ENCODE measurements at regions of chr10 and their contacts with region 1.

Region 1: GRCh38 chr10:71748671-71749191 is 24.6 kb downstream of the VSIR start:
- DNase-seq: peak; percentile 85
- ATAC-seq: peak; percentile 83
- H3K4me3 Mint-ChIP-seq: peak overlapping the region; percentile 79
- H3K27ac Mint-ChIP-seq: peak overlapping the region; percentile 97
- H3K4me1 Mint-ChIP-seq: peaks cover 90% of the 10 kb centered on the region
- H3K27me3 Mint-ChIP-seq: no peaks in the 10 kb centered on the region

Region 2: DNA sequence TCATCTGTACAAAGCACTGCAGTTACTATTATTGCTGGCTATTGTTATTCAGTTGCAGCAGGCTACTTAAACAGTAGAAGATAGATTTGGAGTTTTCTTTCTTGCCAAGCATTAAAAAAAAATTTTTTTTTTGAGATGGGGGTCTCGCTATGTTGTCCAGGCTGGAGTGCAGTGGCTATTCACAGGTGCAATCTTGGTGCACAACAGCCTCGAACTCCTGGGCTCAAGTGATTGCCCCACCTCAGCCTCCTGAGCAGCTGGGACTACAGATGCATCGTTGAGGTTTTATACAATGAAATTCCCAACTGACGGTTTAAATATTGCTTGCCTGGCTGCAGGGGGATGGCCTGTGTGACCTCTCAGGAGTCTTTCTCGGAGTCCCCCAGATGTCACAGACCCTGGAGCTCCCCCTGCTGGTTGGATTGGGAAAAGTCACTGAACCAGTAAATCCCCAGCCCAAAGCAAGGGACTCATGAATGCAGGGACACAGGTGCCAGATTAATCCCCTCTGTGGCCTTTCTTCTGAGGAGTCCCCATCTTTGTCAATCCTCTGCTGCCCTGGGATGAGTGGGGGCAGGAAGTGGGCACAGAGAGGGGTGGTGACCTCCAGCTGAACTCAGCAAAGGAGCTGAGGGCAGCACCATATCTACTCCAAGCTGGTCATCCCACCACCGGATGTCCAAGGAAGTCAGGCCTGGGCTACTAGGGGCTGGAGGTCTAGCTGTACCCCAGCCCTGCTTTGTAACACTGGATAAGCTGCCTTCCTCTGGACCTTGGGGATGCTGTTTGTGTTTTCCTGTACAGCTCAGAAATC is 178.7 kb before region 1 on chr10:
- POLR2A ChIA-PET with region 1: no interaction called
- DNase-seq: peak; percentile 73
- ATAC-seq: peak; percentile 55
- H3K4me3 Mint-ChIP-seq: no peak overlapping the region
- H3K27ac Mint-ChIP-seq: no peak overlapping the region
- H3K4me1 Mint-ChIP-seq: peaks cover 4% of the 10 kb centered on the region
- H3K27me3 Mint-ChIP-seq: peaks cover 3% of the 10 kb centered on the region

Region 3: GRCh38 chr10:71696628-71697326 is 52.0 kb before region 1 on chr10:
- POLR2A ChIA-PET with region 1: interaction called, 15 read pairs
- DNase-seq: peak; percentile 78
- ATAC-seq: peak; percentile 55
- H3K4me3 Mint-ChIP-seq: no peak overlapping the region
- H3K27ac Mint-ChIP-seq: no peak overlapping the region
- H3K4me1 Mint-ChIP-seq: peaks cover 36% of the 10 kb centered on the region
- H3K27me3 Mint-ChIP-seq: no peaks in the 10 kb centered on the region

Region 4: DNA sequence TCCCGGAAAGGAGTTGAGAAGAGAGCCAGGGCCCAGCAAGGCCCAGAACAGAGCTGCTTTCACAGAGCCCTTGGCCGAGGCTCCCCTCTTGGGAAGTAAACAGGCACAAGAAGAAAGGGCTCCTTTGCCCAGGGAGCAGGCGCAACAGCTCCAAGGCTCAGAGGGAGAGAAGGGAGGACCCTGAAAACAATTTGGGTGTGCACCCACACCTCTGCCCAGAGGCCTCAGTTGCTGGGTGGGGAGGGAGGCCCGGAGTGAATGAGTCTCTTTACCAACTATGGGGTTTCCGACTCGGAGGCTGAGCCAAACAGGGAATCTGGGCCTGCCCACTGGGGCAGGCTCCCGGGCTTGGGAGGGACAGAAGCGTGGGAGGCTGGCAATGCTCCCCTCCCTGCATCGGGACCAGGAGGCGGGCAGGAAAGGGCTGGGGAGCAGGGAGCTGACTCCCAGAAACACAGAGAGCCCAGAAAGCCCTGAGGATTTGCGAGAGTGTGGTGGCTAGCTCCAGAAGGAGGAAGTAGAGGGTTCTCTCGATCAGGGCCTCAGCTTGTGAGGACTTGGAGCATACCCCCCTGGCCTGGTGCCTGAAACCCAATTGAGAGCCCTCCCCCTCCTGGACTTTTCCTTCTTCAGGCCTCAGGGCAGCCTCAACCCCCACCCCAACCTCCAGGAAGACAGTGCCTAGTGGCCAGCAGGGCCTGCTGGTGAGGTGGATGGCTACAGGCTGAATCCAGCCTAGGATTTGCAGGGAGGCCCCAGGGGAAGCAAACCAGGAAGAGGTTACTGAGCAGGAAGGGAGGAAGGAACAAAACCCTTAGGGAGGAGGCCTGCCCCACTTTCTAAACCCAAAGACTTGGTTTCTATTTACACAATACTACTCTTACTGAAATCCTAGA is 35.3 kb before region 1 on chr10:
- POLR2A ChIA-PET with region 1: interaction called, 17 read pairs
- DNase-seq: peak; percentile 68
- ATAC-seq: peak; percentile 69
- H3K4me3 Mint-ChIP-seq: peak overlapping the region; percentile 87
- H3K27ac Mint-ChIP-seq: peak overlapping the region; percentile 96
- H3K4me1 Mint-ChIP-seq: peaks cover 36% of the 10 kb centered on the region
- H3K27me3 Mint-ChIP-seq: no peaks in the 10 kb centered on the region

Region 5: GRCh38 chr10:71766702-71767419 is 18.1 kb after region 1 on chr10:
- POLR2A ChIA-PET with region 1: interaction called, 341 read pairs
- DNase-seq: no peak
- ATAC-seq: no peak
- H3K4me3 Mint-ChIP-seq: peak overlapping the region; percentile 57
- H3K27ac Mint-ChIP-seq: peak overlapping the region; percentile 83
- H3K4me1 Mint-ChIP-seq: peaks cover 75% of the 10 kb centered on the region
- H3K27me3 Mint-ChIP-seq: no peaks in the 10 kb centered on the region

Measured in activated naive CD8-positive, alpha-beta T cell treated with anti-CD3 and anti-CD28 coated beads, Interleukin-2, amount 10 ng/mL, durations not matched to agents 7 days and 5 days (primary cell).